K562 (cell line): ENCODE measurements at regions of chr5 and their contacts with region 1.

Region 1: GRCh38 chr5:79666758-79667157 is 22.9 kb upstream of the CMYA5 start:
- DNase-seq: no peak
- ATAC-seq: no peak; the same call in 2 of the 3 replicates
- H3K4me3 ChIP-seq: no peak overlapping the region
- H3K27ac ChIP-seq: peak overlapping the region; percentile 13; the same call in 1 of the 3 replicates
- H3K4me1 ChIP-seq: no peaks in the 10 kb centered on the region
- H3K27me3 ChIP-seq: no peaks in the 10 kb centered on the region
- CTCF ChIP-seq: no peak
- EP300 ChIP-seq: no peak
- POLR2A ChIP-seq: no peak
- RAD21 ChIP-seq: 0 out of 4 replicates have a peak, but pooled peaks of 1 of the 2 experiments have one; percentile 6

Region 2: DNA sequence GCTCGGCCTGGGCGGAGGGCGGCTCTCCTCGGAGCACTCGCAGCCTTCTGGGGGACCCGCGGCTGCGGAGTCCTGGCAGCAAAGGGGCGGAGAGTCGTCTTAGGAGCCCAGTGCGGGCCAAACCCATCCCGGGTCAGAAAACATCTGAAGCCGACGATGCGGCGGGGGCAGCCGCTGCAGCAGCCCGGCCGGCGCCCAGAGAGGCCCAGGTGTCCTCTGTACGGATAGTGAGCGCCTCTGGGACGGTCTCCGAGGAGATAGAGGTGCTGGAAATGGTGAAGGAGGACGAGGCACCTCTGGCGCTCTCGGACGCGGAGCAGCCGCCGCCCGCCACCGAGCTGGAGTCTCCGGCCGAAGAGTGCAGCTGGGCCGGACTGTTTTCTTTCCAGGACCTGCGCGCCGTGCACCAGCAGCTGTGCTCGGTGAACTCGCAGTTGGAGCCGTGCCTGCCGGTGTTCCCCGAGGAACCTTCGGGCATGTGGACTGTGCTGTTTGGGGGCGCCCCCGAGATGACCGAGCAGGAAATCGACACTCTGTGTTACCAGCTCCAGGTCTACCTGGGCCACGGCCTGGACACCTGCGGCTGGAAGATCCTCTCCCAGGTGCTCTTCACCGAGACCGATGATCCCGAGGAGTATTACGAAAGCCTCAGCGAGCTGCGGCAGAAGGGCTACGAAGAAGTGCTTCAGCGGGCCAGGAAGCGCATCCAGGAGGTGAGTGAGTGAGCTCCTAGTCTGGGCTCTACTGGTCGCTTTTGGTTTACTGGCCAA is 429.6 kb before region 1 on chr5:
- CTCF ChIA-PET with region 1: no interaction called
- POLR2A ChIA-PET with region 1: no interaction called
- in situ Hi-C with region 1: no loop called
- intact Hi-C with region 1: no loop called
- DNase-seq: peak; percentile 22 to 68 (median 46)
- ATAC-seq: peak; percentile 68
- H3K4me3 ChIP-seq: peak overlapping the region; percentile 52
- H3K27ac ChIP-seq: peak overlapping the region; percentile 73
- H3K4me1 ChIP-seq: peaks cover 0 to 20% of the 10 kb centered on the region in 2 experiments; a peak in 3 of 5 replicates
- H3K27me3 ChIP-seq: no peaks in the 10 kb centered on the region
- CTCF ChIP-seq: no peak
- EP300 ChIP-seq: no peak
- POLR2A ChIP-seq: no peak
- RAD21 ChIP-seq: no peak

Region 3: DNA sequence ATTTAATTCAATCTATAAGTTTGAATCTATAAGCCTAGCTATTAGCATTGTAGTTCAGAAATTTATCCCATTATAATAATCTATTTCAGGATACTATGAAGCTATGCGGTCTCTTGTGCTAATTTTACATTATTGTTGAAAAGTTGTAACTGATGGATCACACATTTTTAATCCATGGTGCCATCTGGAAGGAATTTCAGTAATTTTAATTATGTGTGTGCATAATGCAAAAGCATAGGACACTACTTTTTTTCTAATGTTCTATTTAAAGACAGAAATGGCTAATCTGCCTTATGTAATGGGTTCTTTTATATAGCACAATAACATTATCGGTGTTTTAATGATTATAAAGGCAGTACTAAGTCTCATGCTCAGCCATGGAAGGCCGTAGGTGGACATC is 243.5 kb before region 1 on chr5:
- CTCF ChIA-PET with region 1: no interaction called
- POLR2A ChIA-PET with region 1: no interaction called
- in situ Hi-C with region 1: no loop called
- intact Hi-C with region 1: no loop called
- DNase-seq: no peak
- ATAC-seq: no peak
- H3K4me3 ChIP-seq: no peak overlapping the region
- H3K27ac ChIP-seq: no peak overlapping the region
- H3K4me1 ChIP-seq: no peaks in the 10 kb centered on the region
- H3K27me3 ChIP-seq: no peaks in the 10 kb centered on the region
- CTCF ChIP-seq: no peak
- EP300 ChIP-seq: no peak
- POLR2A ChIP-seq: no peak
- RAD21 ChIP-seq: no peak

Region 4: GRCh38 chr5:79628811-79629210 is 37.9 kb before region 1 on chr5:
- CTCF ChIA-PET with region 1: no interaction called
- POLR2A ChIA-PET with region 1: no interaction called
- in situ Hi-C with region 1: loop called (anchors 5 kb)
- intact Hi-C with region 1: no loop called
- DNase-seq: no peak
- ATAC-seq: no peak
- H3K4me3 ChIP-seq: no peak overlapping the region
- H3K27ac ChIP-seq: no peak overlapping the region
- H3K4me1 ChIP-seq: no peaks in the 10 kb centered on the region
- H3K27me3 ChIP-seq: no peaks in the 10 kb centered on the region
- CTCF ChIP-seq: no peak
- EP300 ChIP-seq: no peak
- POLR2A ChIP-seq: no peak
- RAD21 ChIP-seq: no peak